WTC11 (cell line): ENCODE measurements at regions of chr1 and their contacts with region 1.

Region 1: DNA sequence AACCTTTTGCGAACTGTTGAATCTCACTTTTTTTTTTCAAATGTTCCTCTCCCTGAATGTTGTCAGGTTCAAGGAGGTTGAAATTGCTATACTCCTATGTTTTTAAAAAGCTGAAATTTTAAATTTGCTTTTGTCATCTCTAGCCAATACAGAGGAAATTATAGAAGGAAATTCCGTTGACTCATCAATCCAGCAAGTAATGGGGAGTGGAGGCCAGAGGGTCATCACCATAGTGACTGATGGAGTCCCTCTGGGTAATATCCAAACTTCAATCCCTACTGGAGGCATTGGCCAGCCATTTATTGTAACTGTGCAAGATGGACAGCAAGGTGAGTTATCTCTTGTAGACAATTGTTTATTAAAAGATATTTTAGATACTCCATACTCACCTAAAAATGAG is 36.3 kb downstream of the GABPB2 start:
- DNase-seq: no peak
- ATAC-seq: no peak
- H3K4me3 Mint-ChIP-seq: no peak overlapping the region
- H3K27ac Mint-ChIP-seq: no peak overlapping the region
- H3K4me1 Mint-ChIP-seq: no peaks in the 10 kb centered on the region
- H3K27me3 Mint-ChIP-seq: no peaks in the 10 kb centered on the region
- CTCF ChIP-seq: no peak

Region 2: DNA sequence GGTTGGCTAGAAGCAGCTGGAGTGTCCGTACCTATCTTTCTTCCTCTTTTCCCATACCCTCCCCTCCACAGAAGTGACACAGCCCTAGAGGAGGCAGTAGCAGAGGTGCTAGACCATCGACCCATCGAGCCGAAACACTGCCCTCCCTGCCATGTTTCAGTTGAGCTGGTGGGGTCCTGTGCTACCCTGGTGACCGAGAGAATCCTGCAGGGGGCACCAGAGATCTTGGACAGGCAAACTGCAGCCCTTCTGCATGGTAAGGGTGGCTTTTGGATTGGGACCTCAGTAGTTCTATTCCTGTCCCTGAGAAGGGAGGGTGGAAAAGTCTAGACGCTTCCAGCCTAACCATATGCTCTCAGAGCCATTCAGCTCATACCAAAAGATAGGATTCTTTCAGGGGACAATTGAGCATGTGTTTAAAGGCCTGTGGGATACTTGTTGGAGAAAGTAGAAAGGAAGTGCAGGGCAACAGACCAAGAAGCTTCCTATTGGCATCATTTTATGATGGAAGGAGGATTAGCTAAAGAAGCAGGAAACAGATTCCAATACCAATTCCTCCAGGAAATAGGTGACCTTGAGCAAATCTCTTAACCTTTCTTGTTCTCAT is 82.3 kb before region 1 on chr1:
- CTCF ChIA-PET with region 1: no interaction called
- POLR2A ChIA-PET with region 1: no interaction called
- DNase-seq: peak; percentile 92
- ATAC-seq: peak; percentile 100
- H3K4me3 Mint-ChIP-seq: no peak overlapping the region
- H3K27ac Mint-ChIP-seq: peak overlapping the region; percentile 33; the same call in 1 of the 2 replicates
- H3K4me1 Mint-ChIP-seq: no peaks in the 10 kb centered on the region
- H3K27me3 Mint-ChIP-seq: no peaks in the 10 kb centered on the region
- CTCF ChIP-seq: peak; percentile 67

Region 3: GRCh38 chr1:151130987-151131586 is 24.2 kb after region 1 on chr1:
- CTCF ChIA-PET with region 1: interaction called, 50 read pairs
- POLR2A ChIA-PET with region 1: no interaction called
- DNase-seq: peak; percentile 96
- ATAC-seq: peak; percentile 93
- H3K4me3 Mint-ChIP-seq: peak overlapping the region; percentile 72
- H3K27ac Mint-ChIP-seq: peak overlapping the region; percentile 83
- H3K4me1 Mint-ChIP-seq: peaks cover 15% of the 10 kb centered on the region
- H3K27me3 Mint-ChIP-seq: peaks cover 43% of the 10 kb centered on the region
- CTCF ChIP-seq: no peak

Region 4: DNA sequence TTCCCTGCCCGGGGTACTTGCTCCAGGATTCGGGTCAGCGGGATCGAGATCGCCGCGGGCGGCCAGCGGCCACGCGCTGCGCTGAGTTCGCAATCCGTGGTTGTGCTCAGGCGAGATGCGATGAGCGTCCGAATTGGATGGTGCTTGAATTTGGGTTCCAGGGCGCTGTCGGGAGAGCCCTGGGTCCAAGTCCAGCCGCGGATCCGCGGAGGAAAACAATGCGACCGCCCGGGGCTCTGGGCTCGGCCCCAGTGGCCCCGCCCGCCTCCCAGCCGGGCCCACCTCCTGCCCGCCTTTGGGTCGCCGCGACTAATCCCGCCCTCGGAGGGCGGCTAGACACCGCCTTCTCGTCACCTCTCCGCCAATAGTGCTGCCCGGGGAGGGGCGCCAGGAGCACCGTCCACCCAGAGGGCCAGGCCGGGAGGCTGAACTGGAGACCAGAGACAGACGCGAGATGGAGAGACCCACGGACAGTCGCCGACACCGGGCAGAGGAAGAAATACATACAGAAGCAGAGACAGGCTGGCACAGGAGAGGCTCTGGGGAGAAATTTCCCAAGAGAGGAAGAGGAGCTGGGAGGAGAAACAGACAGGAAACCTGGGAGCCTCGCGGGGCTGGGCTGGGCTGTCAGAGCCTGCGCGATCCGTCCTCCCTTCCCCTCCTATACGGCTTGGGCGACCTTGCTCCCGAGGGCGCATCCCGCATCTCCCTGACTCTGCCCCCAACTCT is 39.7 kb after region 1 on chr1 and contains the start of gene SEMA6C:
- CTCF ChIA-PET with region 1: interaction called, 63 read pairs
- POLR2A ChIA-PET with region 1: no interaction called
- DNase-seq: peak; percentile 94
- ATAC-seq: peak; percentile 92
- H3K4me3 Mint-ChIP-seq: peak within 1 kb of the TSS; percentile 93
- H3K27ac Mint-ChIP-seq: no peak within 1 kb of the TSS
- H3K4me1 Mint-ChIP-seq: peaks cover 38% of the 10 kb centered on the region
- H3K27me3 Mint-ChIP-seq: peaks cover 44% of the 10 kb centered on the region
- CTCF ChIP-seq: no peak
- total RNA-seq, gene SEMA6C: 16.3 to 21.0 TPM (median 18.1 TPM) in 3 replicates

Region 5: DNA sequence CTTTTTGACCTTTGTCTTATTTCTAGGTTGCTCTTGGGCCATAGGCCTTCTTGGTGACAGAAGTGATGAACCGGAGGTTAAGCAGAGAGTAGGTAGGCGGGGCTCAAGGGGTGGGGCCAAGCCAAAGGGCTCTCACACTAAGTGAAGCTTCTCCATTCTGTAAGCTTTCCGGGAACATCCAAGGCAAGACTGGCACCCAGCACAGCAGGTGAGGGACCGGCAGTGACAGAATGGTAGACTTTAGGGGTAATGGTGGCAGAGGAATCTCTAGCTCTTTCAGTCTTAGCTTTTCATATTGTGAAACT is 49.6 kb after region 1 on chr1 and contains the start of gene TNFAIP8L2:
- CTCF ChIA-PET with region 1: interaction called, 167 read pairs
- POLR2A ChIA-PET with region 1: no interaction called
- DNase-seq: peak; percentile 43
- ATAC-seq: peak; percentile 76
- H3K4me3 Mint-ChIP-seq: no peak within 1 kb of the TSS
- H3K27ac Mint-ChIP-seq: peak within 1 kb of the TSS; percentile 11; the same call in 1 of the 2 replicates
- H3K4me1 Mint-ChIP-seq: peaks cover 8% of the 10 kb centered on the region
- H3K27me3 Mint-ChIP-seq: no peaks in the 10 kb centered on the region
- CTCF ChIP-seq: no peak
- total RNA-seq, gene TNFAIP8L2: 0.15 TPM in 1 of 3 replicates, not detected in the others